Posterior cingulate gyrus (tissue), 11 donors: ENCODE measurements at regions of chr2 and their contacts with region 1.

Region 1: DNA sequence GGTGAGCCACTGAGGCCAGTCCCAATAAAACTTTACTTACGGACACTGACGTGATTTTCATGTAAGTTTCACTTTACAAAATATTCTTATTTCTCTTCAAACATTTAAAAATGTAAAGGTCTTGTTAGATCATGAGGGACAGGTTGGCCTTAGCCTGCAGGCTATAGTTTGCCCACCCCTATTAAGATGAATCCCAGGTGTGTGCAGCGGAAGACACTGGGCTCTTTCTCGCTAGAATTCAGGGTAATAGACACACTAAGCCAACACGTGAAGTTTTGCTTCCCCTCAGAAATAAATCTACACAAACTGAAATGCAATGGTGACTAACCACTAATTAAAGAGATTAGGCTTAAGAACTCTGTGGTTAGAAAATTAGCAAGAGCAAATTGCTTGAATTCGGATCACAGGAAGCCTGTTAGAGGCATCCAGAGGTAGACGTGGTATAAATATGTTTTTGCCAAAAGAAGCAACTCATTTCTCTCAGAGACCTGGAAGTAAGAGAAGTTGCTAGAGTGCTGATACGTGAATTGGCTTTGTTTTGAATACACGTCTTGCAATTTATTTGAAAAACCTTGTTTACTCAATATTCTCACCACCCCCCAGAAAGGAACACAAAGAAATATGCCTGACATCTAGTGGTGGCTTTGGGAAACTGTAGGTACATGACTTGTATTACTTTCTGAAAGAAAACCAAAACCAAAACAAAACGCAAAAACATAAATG is 151.6 kb downstream of the DTNB start:
- DNase-seq: no peak

Region 2: DNA sequence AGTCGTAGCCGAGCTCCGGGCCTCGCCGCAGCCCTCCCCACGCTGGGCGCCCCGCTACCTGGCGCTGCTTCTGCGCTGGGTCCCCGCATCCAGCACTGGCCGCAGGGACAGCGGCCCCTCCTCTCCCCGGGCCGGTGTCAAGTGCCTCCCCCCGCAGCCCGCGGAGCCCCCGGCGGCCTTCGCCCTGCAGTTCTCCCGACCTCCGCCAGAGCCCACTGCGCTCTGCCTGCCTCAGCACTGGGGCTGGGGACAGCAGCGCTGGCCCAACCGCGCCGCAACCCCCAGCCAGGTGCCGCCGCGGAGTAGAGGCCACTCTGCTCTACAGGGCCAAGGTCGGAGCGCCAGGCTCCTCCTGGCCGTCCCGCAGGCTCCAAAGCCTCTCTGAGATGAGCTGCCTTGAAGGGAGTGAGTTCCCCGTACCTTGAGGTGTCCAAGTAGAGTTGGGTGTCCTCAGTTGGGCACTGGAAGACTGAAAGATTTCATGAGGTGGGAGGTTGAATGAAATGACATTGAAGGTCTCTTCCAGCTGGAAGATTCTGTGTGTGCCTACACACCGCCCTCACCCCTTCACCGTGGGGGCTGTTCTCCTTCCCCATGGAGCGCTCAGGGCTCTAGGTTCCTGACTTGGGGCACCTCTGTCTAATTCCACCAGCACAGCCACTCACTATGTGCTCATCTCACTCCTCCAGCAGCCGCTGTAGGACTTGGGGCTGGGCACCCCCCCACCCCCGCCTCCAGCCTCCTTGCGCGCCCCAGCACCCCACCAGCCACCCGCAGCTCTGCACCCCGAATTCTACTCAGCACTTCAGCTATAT is 179.2 kb before region 1 on chr2:
- intact Hi-C with region 1: loop called (anchors 5 kb)
- DNase-seq: peak; percentile 66 to 97 (median 82)

Region 3: GRCh38 chr2:25362049-25362433 is 159.8 kb before region 1 on chr2:
- intact Hi-C with region 1: loop called (anchors 5 kb)
- DNase-seq: peak; percentile 84 to 99 (median 92)

Region 4: DNA sequence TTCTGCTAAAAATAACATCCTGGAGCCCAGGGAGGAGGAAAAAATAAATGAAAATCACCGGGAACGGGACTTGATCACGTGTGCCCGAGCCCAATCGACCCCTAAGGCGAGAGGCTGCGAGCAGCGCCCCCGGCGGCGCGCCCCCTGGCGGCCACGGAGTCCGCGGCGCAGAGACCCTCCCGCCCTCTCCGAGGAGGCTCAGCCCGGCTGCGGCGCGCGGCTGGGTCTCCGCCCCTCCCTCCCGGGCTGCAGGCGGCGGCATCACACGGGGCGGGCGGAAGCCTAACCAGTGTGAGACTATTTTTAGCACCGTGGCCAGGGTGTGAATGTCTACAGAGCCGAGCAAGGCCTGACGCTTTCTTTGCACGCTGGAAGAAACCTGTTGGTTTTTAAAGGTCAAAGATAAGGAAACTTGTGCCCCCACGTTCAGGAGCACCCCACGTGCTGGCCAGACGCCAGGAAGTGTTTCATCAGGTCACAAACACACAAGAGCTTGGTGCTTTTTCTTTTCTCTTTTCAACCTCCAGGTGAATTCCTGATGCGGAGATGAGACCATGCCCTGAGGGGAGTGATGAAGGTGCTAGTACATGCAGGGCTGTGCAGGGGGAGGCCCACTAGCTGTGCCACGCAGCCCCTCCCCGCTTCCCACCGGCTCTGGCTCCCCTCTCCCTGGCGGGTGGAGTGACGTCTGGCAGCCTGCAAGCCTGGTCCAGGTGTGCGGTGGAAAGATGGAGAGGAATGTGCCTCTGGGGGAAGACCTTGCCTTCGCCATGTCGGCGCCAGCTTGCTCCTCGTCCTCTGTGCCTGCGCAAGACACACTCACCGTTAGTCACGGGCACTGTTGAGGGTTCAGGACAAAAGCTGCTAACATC is 144.8 kb before region 1 on chr2:
- intact Hi-C with region 1: loop called (anchors 5 kb)
- DNase-seq: peak; percentile 65 to 97 (median 81)

Region 5: GRCh38 chr2:25673300-25674076 is 151.7 kb after region 1 on chr2 and contains the start of gene DTNB:
- intact Hi-C with region 1: loop called (anchors 10 kb)
- DNase-seq: peak; percentile 53 to 96 (median 67)